ENCODE measurements at regions of chr22 and their contacts with region 1.

Region 1: DNA sequence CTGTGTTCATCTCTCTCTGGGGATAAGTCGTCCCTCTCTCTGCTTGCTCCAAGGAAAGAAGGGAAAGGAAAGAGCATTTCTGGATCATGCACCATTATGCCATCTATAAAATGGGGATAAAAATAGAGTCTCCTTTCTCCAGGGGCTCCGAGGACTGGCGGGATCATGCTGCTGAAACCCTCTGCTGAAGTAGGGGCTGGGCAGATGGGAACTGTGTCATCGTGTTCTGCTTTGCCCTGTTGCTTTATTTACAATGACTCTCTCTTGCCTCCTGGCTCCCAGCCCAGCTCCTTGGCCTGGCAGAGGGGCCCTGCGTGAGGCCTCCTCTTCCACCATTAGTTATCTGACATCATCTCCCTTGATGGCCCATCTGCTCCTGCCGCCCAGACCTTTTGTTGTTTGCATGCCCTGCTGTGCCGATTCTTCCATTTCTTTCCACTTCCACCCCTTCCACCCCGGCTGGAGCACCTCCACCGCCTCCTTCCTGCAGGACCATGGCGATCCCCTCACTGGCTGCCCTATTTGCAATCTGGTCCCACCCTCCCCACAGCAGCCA is 200.9 kb downstream of the MYO18B start:
- DNase-seq: no peak
- ATAC-seq: no peak
- H3K4me3 ChIP-seq: no peak overlapping the region
- H3K4me3 Mint-ChIP-seq: no peak overlapping the region
- H3K27ac ChIP-seq: no peak overlapping the region
- H3K27ac Mint-ChIP-seq: no peak overlapping the region
- H3K4me1 ChIP-seq: no peaks in the 10 kb centered on the region
- H3K4me1 Mint-ChIP-seq: no peaks in the 10 kb centered on the region
- H3K27me3 ChIP-seq: no peaks in the 10 kb centered on the region
- H3K27me3 Mint-ChIP-seq: peaks cover 20% of the 10 kb centered on the region
- CTCF ChIP-seq: no peak

Region 2: DNA sequence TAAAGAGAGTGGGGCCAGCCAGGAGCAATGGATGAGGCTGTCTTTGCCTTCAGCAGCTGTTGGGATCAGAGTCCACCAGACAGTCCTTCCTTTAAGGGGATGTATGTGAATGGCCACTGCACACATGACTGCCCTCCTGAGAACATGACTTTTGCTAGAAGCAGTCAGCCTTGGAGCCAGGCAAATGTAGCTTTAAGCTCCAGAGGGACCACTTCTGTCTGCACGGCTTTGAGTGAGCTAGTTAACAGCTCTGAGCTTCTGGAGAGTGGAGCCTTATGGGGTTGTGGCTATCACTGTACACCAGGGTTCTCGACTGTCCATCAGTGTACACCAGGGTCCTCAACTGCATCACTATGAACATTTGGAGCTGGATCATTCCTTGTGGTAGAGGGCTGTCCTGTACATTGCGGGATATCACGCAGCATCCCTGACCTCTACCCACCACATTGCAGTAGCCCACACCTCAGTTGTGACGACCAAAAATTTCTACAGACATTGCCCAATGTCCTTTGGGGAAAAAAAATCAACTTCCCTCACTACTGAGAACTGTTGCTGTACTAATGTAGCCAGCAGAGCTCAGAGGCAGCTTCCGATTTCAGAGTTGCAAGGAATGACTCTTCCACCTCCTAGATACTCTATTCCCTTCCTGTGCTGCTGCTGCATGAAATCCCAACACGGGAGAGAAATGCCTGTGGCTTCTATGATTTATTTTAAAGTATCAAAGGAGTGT is 31.5 kb before region 1 on chr22:
- CTCF ChIA-PET with region 1: no interaction called
- POLR2A ChIA-PET with region 1: no interaction called
- intact Hi-C with region 1: loop called in 1 of 2 experiments (anchors 5 kb)
- DNase-seq: no peak
- ATAC-seq: no peak
- H3K4me3 ChIP-seq: no peak overlapping the region
- H3K4me3 Mint-ChIP-seq: no peak overlapping the region
- H3K27ac ChIP-seq: no peak overlapping the region
- H3K27ac Mint-ChIP-seq: no peak overlapping the region
- H3K4me1 ChIP-seq: no peaks in the 10 kb centered on the region
- H3K4me1 Mint-ChIP-seq: no peaks in the 10 kb centered on the region
- H3K27me3 ChIP-seq: peaks cover 0 to 4% of the 10 kb centered on the region in 2 experiments
- H3K27me3 Mint-ChIP-seq: peaks cover 18% of the 10 kb centered on the region
- CTCF ChIP-seq: no peak